ENCODE measurements at regions of chr11 and their contacts with region 1.

Region 1: DNA sequence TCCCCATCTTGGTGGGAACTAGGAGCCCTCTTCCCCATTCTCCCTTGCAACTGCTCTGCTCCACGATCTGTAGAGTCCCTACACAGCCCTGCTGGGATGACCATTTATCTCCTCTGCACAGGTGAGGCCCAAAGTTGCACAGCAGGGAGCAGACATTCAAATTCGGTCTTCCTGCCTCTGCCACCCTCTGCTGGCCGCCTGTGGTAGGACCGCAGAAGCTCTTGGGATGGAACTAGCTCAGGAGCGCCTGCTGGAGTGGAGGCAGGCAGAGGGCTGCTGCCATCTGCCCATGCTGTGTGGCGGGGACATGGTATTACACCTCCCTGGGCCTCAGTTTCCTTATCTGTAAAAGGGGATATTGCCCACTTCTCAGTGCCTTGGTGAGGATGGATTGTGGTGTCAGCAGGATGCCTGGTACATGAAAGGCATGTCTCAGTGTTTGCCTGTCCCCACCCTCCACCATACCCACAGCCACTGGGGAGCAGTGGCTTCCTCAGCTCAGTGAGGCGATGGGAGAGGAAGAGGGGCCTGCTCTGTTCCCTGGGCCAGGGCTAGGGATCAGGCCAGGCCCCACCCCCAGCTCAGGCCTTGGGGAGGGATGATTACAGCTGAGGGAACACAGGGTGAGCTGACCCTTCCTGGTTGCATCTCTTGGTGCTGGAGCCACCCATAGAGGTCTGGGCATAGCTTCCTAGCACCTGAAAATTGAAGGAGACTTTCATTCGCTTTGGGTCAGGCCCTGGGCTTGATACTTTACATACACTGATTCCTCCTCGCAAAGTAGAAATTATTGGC is 11.3 kb upstream of the OMP start:
- DNase-seq: peak; percentile 79
- ATAC-seq: peak; percentile 81 to 83

Region 2: GRCh38 chr11:76885390-76886097 is 205.8 kb before region 1 on chr11:
- intact Hi-C with region 1: no loop called
- DNase-seq: peak; percentile 31
- ATAC-seq: peak in 1 of 2 donors; percentile 45

Region 3: GRCh38 chr11:77047007-77047927 is 44.1 kb before region 1 on chr11:
- intact Hi-C with region 1: loop called (anchors 1 to 5 kb)
- DNase-seq: peak; percentile 74
- ATAC-seq: peak; percentile 95 to 96